Activated naive CD8-positive, alpha-beta T cell treated with anti-CD3 and anti-CD28 coated beads, Interleukin-2, amount 10 ng/mL, durations not matched to agents 7 days and 5 days (primary cell): ENCODE measurements at regions of chr11 and their contacts with region 1.

Region 1: GRCh38 chr11:57515332-57516060 is at the start of gene SLC43A1:
- DNase-seq: peak; percentile 66
- ATAC-seq: peak; percentile 43
- H3K4me3 Mint-ChIP-seq: peak within 1 kb of the TSS; percentile 99
- H3K27ac Mint-ChIP-seq: peak within 1 kb of the TSS; percentile 98
- H3K4me1 Mint-ChIP-seq: peaks cover 31% of the 10 kb centered on the region
- H3K27me3 Mint-ChIP-seq: no peaks in the 10 kb centered on the region
- total RNA-seq, gene SLC43A1: 28.2 to 28.8 TPM

Region 2: GRCh38 chr11:57493507-57494503 is 21.7 kb before region 1 on chr11:
- POLR2A ChIA-PET with region 1: interaction called, 29 read pairs
- DNase-seq: peak; percentile 76
- ATAC-seq: peak; percentile 82
- H3K4me3 Mint-ChIP-seq: no peak overlapping the region
- H3K27ac Mint-ChIP-seq: peak overlapping the region; percentile 88
- H3K4me1 Mint-ChIP-seq: peaks cover 15% of the 10 kb centered on the region
- H3K27me3 Mint-ChIP-seq: no peaks in the 10 kb centered on the region

Region 3: GRCh38 chr11:57543601-57544000 is 28.1 kb after region 1 on chr11:
- POLR2A ChIA-PET with region 1: no interaction called
- DNase-seq: no peak
- ATAC-seq: no peak
- H3K4me3 Mint-ChIP-seq: no peak overlapping the region
- H3K27ac Mint-ChIP-seq: no peak overlapping the region
- H3K4me1 Mint-ChIP-seq: peaks cover 17% of the 10 kb centered on the region
- H3K27me3 Mint-ChIP-seq: no peaks in the 10 kb centered on the region